Activated CD4-positive, alpha-beta T cell treated with anti-CD3 and anti-CD28 coated beads, Interleukin-2, amount 10 ng/mL, durations not matched to agents 24 days and 14 days (primary cell): ENCODE measurements at regions of chr15 and their contacts with region 1.

Region 1: GRCh38 chr15:95284933-95285421 is 1045.5 kb upstream of the NR2F2 start:
- DNase-seq: peak; percentile 86
- H3K4me3 Mint-ChIP-seq: peak overlapping the region; percentile 50
- H3K27ac Mint-ChIP-seq: peak overlapping the region; percentile 73
- H3K4me1 Mint-ChIP-seq: peaks cover 52% of the 10 kb centered on the region
- H3K27me3 Mint-ChIP-seq: peaks cover 35% of the 10 kb centered on the region

Region 2: DNA sequence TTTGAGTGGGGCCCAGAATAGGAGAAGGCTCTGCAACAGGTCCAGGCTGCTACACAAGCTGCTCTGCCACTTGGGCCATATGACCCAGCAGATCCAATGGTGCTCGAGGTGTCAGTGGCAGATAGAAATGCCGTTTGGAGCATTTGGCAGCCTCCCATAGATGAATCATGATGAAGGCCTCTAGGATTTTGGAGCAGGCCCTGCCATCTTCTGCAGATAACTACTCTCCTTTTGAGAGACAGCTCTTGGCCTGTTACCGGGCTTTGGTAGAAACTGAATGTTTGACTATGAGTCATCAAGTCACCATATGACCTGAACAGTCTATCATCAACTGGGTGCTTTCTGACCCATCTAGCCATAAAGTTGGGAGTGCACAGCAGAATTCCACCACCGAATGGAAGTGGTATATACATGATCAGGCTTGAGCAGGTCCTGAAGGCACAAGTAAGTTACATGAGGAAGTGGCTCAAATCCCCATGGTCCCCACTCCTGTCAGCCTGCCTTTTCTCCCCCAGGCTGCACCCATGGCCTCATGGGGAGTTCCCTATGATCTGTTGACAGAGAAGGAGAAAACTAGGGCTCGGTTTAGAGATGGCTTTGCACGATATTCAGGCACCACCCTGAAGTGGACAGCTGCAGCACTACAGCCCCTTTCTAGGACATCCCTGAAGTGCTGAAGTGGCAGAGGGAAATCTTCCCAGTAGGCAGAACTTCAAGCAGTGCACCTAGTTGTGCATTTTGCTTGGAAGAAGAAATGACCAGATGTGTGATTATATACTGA is 82.2 kb before region 1 on chr15:
- intact Hi-C with region 1: no loop called
- DNase-seq: no peak
- H3K4me3 Mint-ChIP-seq: no peak overlapping the region
- H3K27ac Mint-ChIP-seq: no peak overlapping the region
- H3K4me1 Mint-ChIP-seq: no peaks in the 10 kb centered on the region
- H3K27me3 Mint-ChIP-seq: no peaks in the 10 kb centered on the region

Region 3: GRCh38 chr15:95266451-95267061 is 18.4 kb before region 1 on chr15:
- intact Hi-C with region 1: no loop called
- DNase-seq: no peak
- H3K4me3 Mint-ChIP-seq: no peak overlapping the region
- H3K27ac Mint-ChIP-seq: no peak overlapping the region
- H3K4me1 Mint-ChIP-seq: peaks cover 4% of the 10 kb centered on the region
- H3K27me3 Mint-ChIP-seq: peaks cover 46% of the 10 kb centered on the region

Region 4: DNA sequence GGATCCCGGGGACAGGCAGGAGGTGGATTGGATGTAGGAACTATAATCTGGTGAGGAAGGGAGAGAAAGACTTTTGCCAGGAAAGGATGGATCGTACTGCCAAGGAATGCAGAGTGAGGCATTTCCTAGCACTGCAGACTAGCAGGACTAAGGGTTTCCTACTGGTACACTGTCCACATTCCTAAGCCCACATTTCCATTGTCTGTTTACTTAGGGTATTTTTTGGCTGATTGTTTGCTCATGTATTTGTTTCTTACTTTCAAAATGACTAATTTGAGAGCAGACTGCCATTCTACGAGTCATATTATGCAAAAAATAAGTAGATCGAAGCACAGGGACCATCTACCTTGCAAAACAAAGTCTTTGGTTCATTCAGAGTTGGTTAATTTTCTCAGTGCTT is 16.0 kb after region 1 on chr15:
- intact Hi-C with region 1: loop called (anchors 2 kb)
- DNase-seq: no peak
- H3K4me3 Mint-ChIP-seq: no peak overlapping the region
- H3K27ac Mint-ChIP-seq: peak overlapping the region; percentile 55
- H3K4me1 Mint-ChIP-seq: peaks cover 36% of the 10 kb centered on the region
- H3K27me3 Mint-ChIP-seq: peaks cover 28% of the 10 kb centered on the region

Region 5: GRCh38 chr15:95503640-95504227 is 218.8 kb after region 1 on chr15:
- intact Hi-C with region 1: loop called (anchors 1 kb)
- DNase-seq: no peak
- H3K4me3 Mint-ChIP-seq: no peak overlapping the region
- H3K27ac Mint-ChIP-seq: no peak overlapping the region
- H3K4me1 Mint-ChIP-seq: peaks cover 9% of the 10 kb centered on the region
- H3K27me3 Mint-ChIP-seq: no peaks in the 10 kb centered on the region

Region 6: DNA sequence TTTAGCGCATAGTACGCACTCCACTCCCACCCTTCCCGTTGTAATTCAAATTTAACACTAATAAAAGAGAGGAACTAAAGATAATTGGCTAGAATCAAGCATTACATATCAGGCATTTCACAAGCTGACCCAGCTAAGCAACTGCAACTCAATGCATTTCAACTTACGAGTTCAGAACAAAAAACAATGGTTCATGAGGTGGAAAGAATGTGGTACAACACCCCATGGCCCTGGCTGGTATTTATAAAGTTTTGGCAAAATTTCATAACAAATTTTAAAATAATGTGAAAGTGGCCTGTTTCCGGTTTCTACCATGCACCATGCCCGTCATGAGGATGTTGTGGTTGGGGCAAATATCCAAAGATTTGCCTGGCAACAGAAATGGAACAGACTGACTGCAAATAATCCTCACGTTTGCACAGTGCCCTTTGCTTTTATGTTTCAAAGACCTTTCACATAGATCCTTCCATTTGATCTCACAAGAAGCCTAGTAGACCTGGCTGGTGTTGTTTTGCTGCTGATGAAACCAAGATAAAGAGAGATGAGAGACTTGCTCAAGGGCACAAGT is 590.2 kb after region 1 on chr15:
- intact Hi-C with region 1: loop called (anchors 10 kb)
- DNase-seq: peak; percentile 66
- H3K4me3 Mint-ChIP-seq: no peak overlapping the region
- H3K27ac Mint-ChIP-seq: no peak overlapping the region
- H3K4me1 Mint-ChIP-seq: peaks cover 30% of the 10 kb centered on the region
- H3K27me3 Mint-ChIP-seq: peaks cover 7% of the 10 kb centered on the region